H1 (cell line): ENCODE measurements at regions of chr7 and their contacts with region 1.

Region 1: DNA sequence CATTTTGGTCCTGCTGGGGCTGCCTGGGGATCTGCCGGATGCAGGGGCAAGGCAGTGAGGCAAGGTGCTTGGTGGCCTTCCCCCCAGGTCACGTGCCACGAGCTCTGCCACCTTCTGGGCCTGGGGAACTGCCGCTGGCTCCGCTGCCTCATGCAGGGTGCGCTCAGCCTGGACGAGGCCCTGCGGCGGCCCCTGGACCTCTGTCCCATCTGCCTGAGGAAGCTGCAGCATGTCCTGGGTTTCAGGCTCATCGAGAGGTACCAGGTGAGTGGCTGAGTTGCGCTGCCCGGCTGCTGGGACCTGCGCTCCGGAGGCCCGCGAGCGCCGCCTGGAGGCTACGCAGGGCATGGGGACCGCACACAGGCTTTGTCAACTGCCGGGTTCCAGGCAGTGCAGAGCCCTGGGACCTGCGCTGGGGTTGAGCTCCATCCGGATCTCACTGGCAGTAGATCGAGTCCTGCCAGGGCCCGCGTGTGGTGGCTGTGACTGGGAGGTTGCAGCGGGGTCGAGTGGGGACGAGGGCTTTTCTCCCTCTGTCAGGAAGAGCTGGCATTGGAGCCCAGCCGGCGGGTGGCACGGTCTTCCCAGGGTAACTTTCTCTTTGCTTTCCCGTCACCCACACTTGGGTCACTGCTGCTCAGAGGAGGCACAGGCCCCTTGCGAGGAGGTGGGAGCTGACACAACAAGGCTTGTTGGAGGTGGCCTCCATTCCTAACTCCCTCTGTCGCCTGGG is 21.7 kb downstream of the AMZ1 start:
- DNase-seq: peak; percentile 90 to 93
- H3K4me3 ChIP-seq: no peak overlapping the region
- H3K27ac ChIP-seq: no peak overlapping the region
- H3K4me1 ChIP-seq: peaks cover 0 to 5% (median under 1%) of the 10 kb centered on the region in 4 experiments; a peak in 2 of 7 replicates
- H3K27me3 ChIP-seq: no peaks in the 10 kb centered on the region
- CTCF ChIP-seq: peak in 2 of 3 experiments; percentile 97 to 99; a peak in 3 of 4 replicates
- EP300 ChIP-seq: no peak
- POLR2A ChIP-seq: no peak
- RAD21 ChIP-seq: peak; percentile 88 to 92

Region 2: GRCh38 chr7:2613931-2614600 is 95.7 kb before region 1 on chr7:
- CTCF ChIA-PET with region 1: interaction called, 11 read pairs
- POLR2A ChIA-PET with region 1: no interaction called
- DNase-seq: no peak
- H3K4me3 ChIP-seq: no peak overlapping the region
- H3K27ac ChIP-seq: no peak overlapping the region
- H3K4me1 ChIP-seq: peaks cover 0 to 32% (median 17%) of the 10 kb centered on the region in 4 experiments; a peak in 6 of 7 replicates
- H3K27me3 ChIP-seq: 0 out of 7 replicates have a peak, but pooled peaks cover 0 to 2% (median 0%) of the 10 kb centered on the region in 4 experiments
- CTCF ChIP-seq: no peak
- EP300 ChIP-seq: no peak
- POLR2A ChIP-seq: no peak
- RAD21 ChIP-seq: no peak

Region 3: GRCh38 chr7:2670720-2671391 is 38.9 kb before region 1 on chr7:
- CTCF ChIA-PET with region 1: interaction called, 83 read pairs
- POLR2A ChIA-PET with region 1: interaction called, 5 read pairs
- DNase-seq: peak in 1 of 2 experiments; percentile 94
- H3K4me3 ChIP-seq: no peak overlapping the region
- H3K27ac ChIP-seq: no peak overlapping the region
- H3K4me1 ChIP-seq: no peaks in the 10 kb centered on the region
- H3K27me3 ChIP-seq: peaks cover 0 to 7% (median 0%) of the 10 kb centered on the region in 4 experiments; a peak in 2 of 7 replicates
- CTCF ChIP-seq: peak in 2 of 3 experiments; percentile 90 to 94; a peak in 3 of 4 replicates
- EP300 ChIP-seq: no peak
- POLR2A ChIP-seq: no peak
- RAD21 ChIP-seq: peak; percentile 87 to 88

Region 4: GRCh38 chr7:2688409-2689331 is 21.0 kb before region 1 on chr7:
- CTCF ChIA-PET with region 1: interaction called, 92 read pairs
- POLR2A ChIA-PET with region 1: no interaction called
- DNase-seq: peak in 1 of 2 experiments; percentile 66
- H3K4me3 ChIP-seq: peak overlapping the region; percentile 25 to 63 (median 46)
- H3K27ac ChIP-seq: no peak overlapping the region
- H3K4me1 ChIP-seq: peaks cover 0 to 11% (median 8%) of the 10 kb centered on the region in 4 experiments; a peak in 5 of 7 replicates
- H3K27me3 ChIP-seq: peaks cover 7 to 34% (median 30%) of the 10 kb centered on the region in 4 experiments
- CTCF ChIP-seq: no peak
- EP300 ChIP-seq: no peak
- POLR2A ChIP-seq: no peak
- RAD21 ChIP-seq: no peak

Region 5: DNA sequence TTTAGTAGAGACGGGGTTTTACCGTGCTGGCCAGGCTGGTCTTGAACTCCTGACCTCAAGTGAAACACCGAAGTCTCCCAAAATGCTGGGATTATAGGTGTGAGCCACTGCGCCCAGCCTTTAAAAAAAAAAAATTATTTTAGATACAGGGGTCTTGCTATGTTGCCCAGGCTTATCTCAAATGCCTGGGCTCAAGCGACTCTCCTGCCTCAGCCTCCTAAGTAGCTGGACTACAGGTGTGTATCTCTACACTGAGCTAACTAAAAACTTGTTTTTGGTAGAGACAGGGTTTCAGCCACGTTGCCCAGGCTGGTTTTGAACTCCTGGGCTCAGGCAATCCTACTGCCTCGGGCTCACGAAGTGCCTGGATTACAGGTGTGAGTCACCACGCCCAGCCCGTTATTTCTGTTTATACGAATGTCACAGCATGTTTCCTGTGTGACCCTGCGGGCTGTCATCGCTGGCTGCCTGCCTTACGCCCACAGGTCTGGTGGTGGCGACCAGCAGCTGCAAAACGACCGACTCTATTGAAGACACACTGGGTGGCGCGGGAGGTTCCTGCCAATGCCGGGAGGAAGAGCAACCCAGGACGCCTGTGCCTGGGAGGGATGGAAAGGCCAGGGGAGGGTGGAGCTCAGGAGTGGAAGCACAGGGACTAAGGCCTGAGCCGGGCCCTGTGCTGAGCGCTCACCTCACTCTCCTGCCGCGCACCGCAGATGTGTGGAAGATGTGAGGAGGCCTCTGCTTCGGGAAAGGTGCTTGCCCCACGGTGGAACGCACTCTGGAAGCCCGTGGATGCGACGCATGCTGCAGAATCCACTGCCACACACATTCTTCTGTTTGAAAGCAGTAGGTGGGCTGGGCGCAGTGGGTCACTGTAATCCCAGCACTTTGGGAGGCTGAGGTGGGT is 11.1 kb after region 1 on chr7:
- CTCF ChIA-PET with region 1: interaction called, 125 read pairs
- POLR2A ChIA-PET with region 1: interaction called, 6 read pairs
- DNase-seq: no peak
- H3K4me3 ChIP-seq: no peak overlapping the region
- H3K27ac ChIP-seq: no peak overlapping the region
- H3K4me1 ChIP-seq: no peaks in the 10 kb centered on the region; a peak in 4 of 7 replicates
- H3K27me3 ChIP-seq: no peaks in the 10 kb centered on the region
- CTCF ChIP-seq: peak in 2 of 3 experiments; percentile 6 to 14; a peak in 2 of 4 replicates
- EP300 ChIP-seq: no peak
- POLR2A ChIP-seq: no peak
- RAD21 ChIP-seq: peak in 1 of 2 experiments; percentile 40; a peak in 2 of 4 replicates